Mammary epithelial cell (primary cell): ENCODE measurements at regions of chr3 and their contacts with region 1.

Region 1: DNA sequence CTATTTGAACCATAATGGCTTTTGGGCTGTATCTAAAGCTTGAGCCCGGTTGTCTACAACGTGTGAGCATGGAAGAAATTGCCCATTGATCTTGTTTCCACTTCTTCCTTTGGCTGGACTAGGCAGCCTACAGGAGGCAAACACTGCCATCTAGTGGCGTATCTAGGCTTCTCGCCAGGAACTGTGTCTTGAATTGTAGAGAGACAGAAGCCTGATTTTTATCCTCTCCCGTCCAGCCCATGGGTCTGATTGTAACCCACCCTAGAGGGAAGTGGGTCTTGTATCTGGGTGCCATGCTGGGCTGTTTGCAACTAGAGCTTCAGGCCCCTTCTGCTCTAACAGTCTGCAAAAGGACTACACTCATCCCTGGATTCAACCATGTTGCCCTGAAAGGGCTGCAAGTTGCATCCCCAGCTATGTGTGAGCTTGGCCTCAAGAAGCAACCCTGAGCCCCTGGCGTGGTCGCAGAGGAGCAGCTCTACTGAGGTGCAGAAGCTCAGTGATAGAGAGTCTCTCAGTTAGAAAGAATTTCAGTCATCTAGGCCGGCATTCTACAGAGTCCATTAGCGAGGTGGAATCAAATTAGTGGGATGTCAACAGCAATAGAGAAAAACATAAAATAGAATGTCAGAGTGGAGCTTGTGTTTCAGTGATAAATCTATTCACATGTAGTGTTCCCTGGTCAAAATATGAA is 170.2 kb upstream of the UMPS start:
- DNase-seq: peak; percentile 64
- H3K4me3 ChIP-seq: no peak overlapping the region
- H3K27ac ChIP-seq: no peak overlapping the region
- H3K4me1 ChIP-seq: peaks cover 27% of the 10 kb centered on the region
- H3K27me3 ChIP-seq: no peaks in the 10 kb centered on the region
- CTCF ChIP-seq: peak; percentile 85 to 91

Region 2: DNA sequence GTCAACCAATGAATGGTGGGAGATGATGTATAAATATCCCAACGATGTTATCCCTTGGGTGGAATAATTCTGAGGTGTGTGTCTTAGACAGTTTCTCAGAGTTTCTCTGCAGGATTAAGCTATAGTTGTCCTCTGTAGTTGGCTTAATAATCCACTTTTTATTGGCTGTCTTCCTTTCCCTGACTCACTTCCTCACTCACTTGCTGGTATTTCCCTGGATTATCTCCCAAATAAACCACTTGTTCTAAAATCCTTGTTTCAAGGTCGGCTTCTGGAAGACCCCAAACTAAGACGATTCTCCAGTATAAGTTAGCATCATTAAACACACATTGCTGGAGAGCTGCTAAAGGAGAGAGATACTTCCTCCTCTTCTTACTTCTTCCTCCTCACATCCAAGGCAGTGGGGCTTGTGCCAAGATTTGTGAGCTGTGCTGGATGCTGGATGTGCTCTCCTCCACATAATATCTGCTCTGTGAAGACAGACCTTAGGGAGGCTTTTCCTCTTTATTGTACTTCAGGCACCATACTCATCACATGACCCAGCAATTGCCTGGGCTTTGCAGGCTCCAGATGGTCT is 545.6 kb before region 1 on chr3:
- CTCF ChIA-PET with region 1: no interaction called
- dilution Hi-C with region 1: no loop called
- in situ Hi-C with region 1: no loop called
- intact Hi-C with region 1: loop called (anchors 2 kb)
- DNase-seq: no peak
- H3K4me3 ChIP-seq: no peak overlapping the region
- H3K27ac ChIP-seq: no peak overlapping the region
- H3K4me1 ChIP-seq: no peaks in the 10 kb centered on the region
- H3K27me3 ChIP-seq: peaks cover 5% of the 10 kb centered on the region
- CTCF ChIP-seq: no peak

Region 3: GRCh38 chr3:124351430-124352148 is 208.4 kb before region 1 on chr3:
- CTCF ChIA-PET with region 1: no interaction called
- dilution Hi-C with region 1: loop called (anchors 10 kb)
- in situ Hi-C with region 1: loop called in 1 of 2 experiments (anchors 5 kb)
- intact Hi-C with region 1: loop called (anchors 2 kb)
- DNase-seq: peak; percentile 28
- H3K4me3 ChIP-seq: no peak overlapping the region
- H3K27ac ChIP-seq: no peak overlapping the region
- H3K4me1 ChIP-seq: no peaks in the 10 kb centered on the region
- H3K27me3 ChIP-seq: peaks cover 2% of the 10 kb centered on the region
- CTCF ChIP-seq: peak; percentile 37 to 70

Region 4: GRCh38 chr3:124409789-124410261 is 150.2 kb before region 1 on chr3:
- CTCF ChIA-PET with region 1: no interaction called
- dilution Hi-C with region 1: no loop called
- in situ Hi-C with region 1: no loop called
- intact Hi-C with region 1: no loop called
- DNase-seq: peak; percentile 19
- H3K4me3 ChIP-seq: no peak overlapping the region
- H3K27ac ChIP-seq: no peak overlapping the region
- H3K4me1 ChIP-seq: no peaks in the 10 kb centered on the region
- H3K27me3 ChIP-seq: no peaks in the 10 kb centered on the region
- CTCF ChIP-seq: no peak

Region 5: DNA sequence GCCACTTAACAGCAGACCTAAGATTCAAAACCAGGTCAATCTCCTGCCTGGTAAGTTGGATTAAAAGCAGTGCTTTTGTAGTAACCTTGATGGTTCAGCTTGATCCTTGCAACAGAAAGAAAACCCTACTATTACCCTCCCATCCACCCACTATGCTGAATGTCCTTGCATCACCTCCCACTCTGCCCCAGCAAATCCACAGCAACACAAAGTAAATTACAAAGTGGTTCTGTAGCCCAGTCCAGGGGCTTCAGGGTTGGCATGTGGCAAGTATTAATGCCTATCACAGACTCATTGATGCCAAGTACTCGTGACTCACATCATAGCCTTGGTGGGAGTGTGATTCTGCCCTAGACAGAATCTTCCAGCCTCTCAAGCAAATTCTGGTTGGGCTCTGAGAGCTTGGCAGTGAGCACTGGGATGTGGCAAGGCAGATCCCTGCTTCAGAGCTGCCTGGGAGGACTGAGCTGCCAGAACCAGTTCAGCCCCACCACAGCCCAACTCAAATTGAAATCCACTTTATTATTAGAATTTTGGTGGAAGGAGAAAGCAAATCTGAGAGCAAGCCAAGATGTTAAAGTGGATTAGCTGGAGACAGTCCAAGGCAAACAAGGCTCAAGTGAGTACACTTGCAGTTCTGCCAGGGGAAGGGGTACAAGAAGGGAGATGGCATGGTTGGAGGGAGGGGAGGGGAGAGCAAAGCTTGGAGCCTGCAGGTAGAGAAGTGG is 55.5 kb before region 1 on chr3:
- CTCF ChIA-PET with region 1: no interaction called
- dilution Hi-C with region 1: loop called (anchors 5 kb)
- in situ Hi-C with region 1: no loop called
- intact Hi-C with region 1: no loop called
- DNase-seq: peak; percentile 38
- H3K4me3 ChIP-seq: no peak overlapping the region
- H3K27ac ChIP-seq: no peak overlapping the region
- H3K4me1 ChIP-seq: peaks cover 7% of the 10 kb centered on the region
- H3K27me3 ChIP-seq: no peaks in the 10 kb centered on the region
- CTCF ChIP-seq: no peak

Region 6: GRCh38 chr3:124761250-124761796 is 201.3 kb after region 1 on chr3:
- CTCF ChIA-PET with region 1: no interaction called
- dilution Hi-C with region 1: no loop called
- in situ Hi-C with region 1: no loop called
- intact Hi-C with region 1: loop called (anchors 5 kb)
- DNase-seq: peak; percentile 46
- H3K4me3 ChIP-seq: no peak overlapping the region
- H3K27ac ChIP-seq: no peak overlapping the region
- H3K4me1 ChIP-seq: no peaks in the 10 kb centered on the region
- H3K27me3 ChIP-seq: no peaks in the 10 kb centered on the region
- CTCF ChIP-seq: peak; percentile 95 to 98

Region 7: DNA sequence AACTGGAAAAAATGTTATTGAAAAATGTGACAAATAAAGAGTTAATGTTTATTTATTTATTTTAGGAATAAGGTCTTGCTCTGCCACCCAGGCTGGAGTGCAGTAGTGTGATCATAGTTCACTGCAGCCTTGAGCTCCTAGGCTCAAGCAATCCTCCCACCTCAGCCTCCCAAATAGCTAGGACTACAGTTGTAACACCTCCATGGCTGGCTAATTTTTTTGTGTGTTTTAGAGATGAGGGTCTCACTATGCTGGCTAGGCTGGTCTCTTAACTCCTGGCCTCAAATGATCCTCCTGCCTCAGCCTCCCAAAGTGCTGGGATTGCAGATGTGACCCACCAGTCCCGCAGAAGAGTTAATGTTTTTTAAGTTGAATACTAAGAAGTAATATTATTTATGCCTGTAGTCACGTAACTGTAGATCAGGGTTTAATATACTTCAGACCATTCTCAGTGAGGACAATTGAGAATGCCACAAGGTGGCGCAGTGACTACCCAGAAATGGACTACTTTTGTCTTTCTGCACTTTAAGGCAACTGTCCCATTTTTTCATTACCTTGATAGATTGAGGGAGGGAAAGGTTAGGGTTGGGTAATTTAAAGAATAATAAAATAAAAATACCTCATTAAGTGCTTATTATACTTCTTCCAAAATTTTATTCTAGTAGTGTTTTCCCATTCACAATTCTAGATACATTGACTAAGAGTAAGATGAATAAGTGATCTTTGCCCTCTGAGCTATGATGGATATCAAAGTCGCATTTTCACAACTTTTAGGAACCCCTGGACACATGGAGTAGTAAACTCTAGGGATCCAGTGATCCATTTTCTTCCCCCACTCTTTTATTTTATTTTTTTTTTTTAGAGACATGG is 368.5 kb after region 1 on chr3:
- CTCF ChIA-PET with region 1: no interaction called
- dilution Hi-C with region 1: no loop called
- in situ Hi-C with region 1: loop called in 1 of 2 experiments (anchors 25 kb)
- intact Hi-C with region 1: no loop called
- DNase-seq: peak; percentile 45
- H3K4me3 ChIP-seq: no peak overlapping the region
- H3K27ac ChIP-seq: no peak overlapping the region
- H3K4me1 ChIP-seq: no peaks in the 10 kb centered on the region
- H3K27me3 ChIP-seq: no peaks in the 10 kb centered on the region
- CTCF ChIP-seq: peak; percentile 64 to 78